Activated B cell treated with CpG ODN at 0.5 μM for 24 hours (primary cell): ENCODE measurements at regions of chr3 and their contacts with region 1.

Region 1: GRCh38 chr3:126911162-126912026 is 71.5 kb upstream of the PLXNA1 start:
- DNase-seq: peak; percentile 65
- ATAC-seq: peak; percentile 94
- H3K4me3 Mint-ChIP-seq: peak overlapping the region; percentile 75
- H3K27ac Mint-ChIP-seq: peak overlapping the region; percentile 95
- H3K4me1 Mint-ChIP-seq: peaks cover 44% of the 10 kb centered on the region
- H3K27me3 Mint-ChIP-seq: peaks cover 36% of the 10 kb centered on the region
- CTCF ChIP-seq: no peak

Region 2: GRCh38 chr3:125072301-125072700 is 1839.1 kb before region 1 on chr3:
- CTCF ChIA-PET with region 1: no interaction called
- POLR2A ChIA-PET with region 1: no interaction called
- intact Hi-C with region 1: loop called (anchors 10 kb)
- DNase-seq: no peak
- ATAC-seq: no peak
- H3K4me3 Mint-ChIP-seq: no peak overlapping the region
- H3K27ac Mint-ChIP-seq: no peak overlapping the region
- H3K4me1 Mint-ChIP-seq: peaks cover 21% of the 10 kb centered on the region
- H3K27me3 Mint-ChIP-seq: no peaks in the 10 kb centered on the region
- CTCF ChIP-seq: no peak

Region 3: GRCh38 chr3:126703512-126704462 is 207.6 kb before region 1 on chr3 and contains the start of gene CHCHD6:
- CTCF ChIA-PET with region 1: no interaction called
- POLR2A ChIA-PET with region 1: no interaction called
- intact Hi-C with region 1: loop called (anchors 1 kb)
- DNase-seq: peak; percentile 94
- ATAC-seq: peak; percentile 96
- H3K4me3 Mint-ChIP-seq: peak within 1 kb of the TSS; percentile 99
- H3K27ac Mint-ChIP-seq: peak within 1 kb of the TSS; percentile 74
- H3K4me1 Mint-ChIP-seq: peaks cover 17% of the 10 kb centered on the region
- H3K27me3 Mint-ChIP-seq: peaks cover 32% of the 10 kb centered on the region
- CTCF ChIP-seq: no peak
- total RNA-seq, gene CHCHD6: 7.5 and 10.0 TPM in 2 replicates

Region 4: DNA sequence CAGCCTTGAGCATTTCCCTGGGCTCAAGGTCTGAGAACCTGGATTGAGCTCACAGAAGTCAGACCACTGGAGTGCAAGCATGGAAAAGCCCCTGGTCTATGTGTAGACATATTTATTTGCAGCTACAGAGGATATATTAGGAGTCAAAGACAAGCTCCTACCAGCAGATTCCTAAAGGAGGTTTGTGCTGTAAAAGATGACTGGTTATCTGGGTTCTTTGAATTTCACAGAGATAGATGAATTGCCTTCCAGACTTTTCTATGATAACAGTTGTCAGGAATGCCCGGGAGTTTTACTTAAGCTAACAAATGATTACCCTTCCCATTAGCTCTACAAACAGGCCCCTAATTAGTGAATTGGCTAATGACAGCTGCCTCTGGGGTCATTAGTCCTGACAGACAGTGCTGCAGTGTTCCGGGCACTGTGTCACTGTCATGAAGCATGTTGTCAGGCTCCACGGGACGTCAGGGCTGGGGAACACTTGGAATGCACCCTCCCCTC is 22.7 kb after region 1 on chr3:
- CTCF ChIA-PET with region 1: no interaction called
- POLR2A ChIA-PET with region 1: no interaction called
- intact Hi-C with region 1: loop called (anchors 2 kb)
- DNase-seq: no peak
- ATAC-seq: no peak
- H3K4me3 Mint-ChIP-seq: no peak overlapping the region
- H3K27ac Mint-ChIP-seq: no peak overlapping the region
- H3K4me1 Mint-ChIP-seq: no peaks in the 10 kb centered on the region
- H3K27me3 Mint-ChIP-seq: peaks cover 6% of the 10 kb centered on the region
- CTCF ChIP-seq: no peak

Region 5: GRCh38 chr3:126954141-126954842 is 42.9 kb after region 1 on chr3:
- CTCF ChIA-PET with region 1: interaction called, 4 read pairs
- POLR2A ChIA-PET with region 1: interaction called, 35 read pairs
- intact Hi-C with region 1: loop called (anchors 1 kb)
- DNase-seq: no peak
- ATAC-seq: peak; percentile 80
- H3K4me3 Mint-ChIP-seq: peak overlapping the region; percentile 72
- H3K27ac Mint-ChIP-seq: peak overlapping the region; percentile 94
- H3K4me1 Mint-ChIP-seq: peaks cover 40% of the 10 kb centered on the region
- H3K27me3 Mint-ChIP-seq: no peaks in the 10 kb centered on the region
- CTCF ChIP-seq: no peak

Region 6: GRCh38 chr3:127015282-127016042 is 104.1 kb after region 1 on chr3:
- CTCF ChIA-PET with region 1: no interaction called
- POLR2A ChIA-PET with region 1: no interaction called
- intact Hi-C with region 1: no loop called
- DNase-seq: no peak
- ATAC-seq: peak; percentile 71
- H3K4me3 Mint-ChIP-seq: no peak overlapping the region
- H3K27ac Mint-ChIP-seq: no peak overlapping the region
- H3K4me1 Mint-ChIP-seq: peaks cover 6% of the 10 kb centered on the region
- H3K27me3 Mint-ChIP-seq: no peaks in the 10 kb centered on the region
- CTCF ChIP-seq: no peak